ENCODE measurements at regions of chr6 and their contacts with region 1.

Region 1: GRCh38 chr6:2940010-2940850 is 31.1 kb downstream of the SERPINB6 start:
- DNase-seq: peak; percentile 31 to 90 (median 77)
- ATAC-seq: peak; percentile 67 to 68
- H3K4me3 Mint-ChIP-seq: peak overlapping the region; percentile 77 to 94 (median 85)
- H3K27ac Mint-ChIP-seq: peak overlapping the region; percentile 84 to 99 (median 94)
- H3K4me1 Mint-ChIP-seq: peaks cover 38 to 82% (median 69%) of the 10 kb centered on the region in 4 donors
- H3K27me3 Mint-ChIP-seq: no peaks in the 10 kb centered on the region

Region 2: DNA sequence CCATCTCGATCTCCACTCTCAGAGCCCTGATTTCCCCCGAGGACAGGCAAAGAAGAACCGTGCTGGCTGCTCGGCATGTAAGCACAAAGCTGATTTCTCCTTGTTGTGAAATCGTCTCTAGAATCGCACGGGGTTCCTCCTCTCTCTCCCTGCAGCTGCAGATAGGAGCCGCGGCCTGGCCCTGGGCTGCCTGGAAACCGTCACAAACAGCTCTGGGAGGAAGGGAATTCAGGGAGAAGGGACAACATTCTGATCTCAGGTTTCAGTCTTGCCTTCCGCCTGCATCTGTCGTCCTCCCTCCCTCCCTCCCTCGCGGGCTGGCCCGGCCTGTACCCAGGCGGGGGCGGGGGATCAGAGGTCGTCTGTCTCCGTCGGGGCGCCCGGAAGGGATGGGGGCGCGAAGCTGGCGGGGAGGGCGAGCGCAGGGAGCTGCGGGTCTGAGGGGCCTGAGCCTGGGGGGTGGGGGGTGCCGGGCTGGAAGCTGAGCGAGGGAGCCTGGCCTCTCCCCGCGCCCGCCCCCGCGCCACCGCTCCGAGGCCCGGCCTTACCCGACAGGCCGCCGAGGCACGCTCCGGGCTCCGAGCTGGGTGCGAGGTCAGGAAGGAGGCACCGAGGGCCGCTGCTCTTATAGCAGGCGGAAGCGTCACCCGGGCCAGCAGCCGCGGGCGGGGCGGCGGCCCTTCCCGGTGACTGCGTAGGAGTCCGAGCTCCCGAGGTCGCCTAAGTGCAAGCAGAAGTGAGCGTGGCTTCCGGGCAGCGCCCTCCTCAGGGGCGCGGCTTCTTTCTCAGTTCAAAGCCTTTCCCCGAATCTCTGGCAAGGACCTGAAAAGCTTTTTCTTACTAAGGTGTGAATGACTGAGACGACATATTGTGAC is 98.7 kb before region 1 on chr6 and contains the start of gene SERPINB1:
- POLR2A ChIA-PET with region 1: interaction called, 35 read pairs
- DNase-seq: peak; percentile 56 to 82 (median 66)
- ATAC-seq: peak; percentile 78
- H3K4me3 Mint-ChIP-seq: peak within 1 kb of the TSS; percentile 86 to 95 (median 90)
- H3K27ac Mint-ChIP-seq: peak within 1 kb of the TSS; percentile 86 to 97 (median 94)
- H3K4me1 Mint-ChIP-seq: peaks cover 22 to 71% (median 50%) of the 10 kb centered on the region in 4 donors
- H3K27me3 Mint-ChIP-seq: no peaks in the 10 kb centered on the region
- polyA plus RNA-seq, gene SERPINB1: 121 to 130 (median 123) TPM

Region 3: GRCh38 chr6:2876210-2877056 is 63.8 kb before region 1 on chr6:
- POLR2A ChIA-PET with region 1: interaction called, 20 read pairs
- DNase-seq: no peak
- ATAC-seq: peak; percentile 15 to 24
- H3K4me3 Mint-ChIP-seq: peak overlapping the region; percentile 72 to 94 (median 89)
- H3K27ac Mint-ChIP-seq: peak overlapping the region; percentile 91 to 99 (median 96)
- H3K4me1 Mint-ChIP-seq: peaks cover 44 to 88% (median 81%) of the 10 kb centered on the region in 4 donors
- H3K27me3 Mint-ChIP-seq: no peaks in the 10 kb centered on the region

Region 4: DNA sequence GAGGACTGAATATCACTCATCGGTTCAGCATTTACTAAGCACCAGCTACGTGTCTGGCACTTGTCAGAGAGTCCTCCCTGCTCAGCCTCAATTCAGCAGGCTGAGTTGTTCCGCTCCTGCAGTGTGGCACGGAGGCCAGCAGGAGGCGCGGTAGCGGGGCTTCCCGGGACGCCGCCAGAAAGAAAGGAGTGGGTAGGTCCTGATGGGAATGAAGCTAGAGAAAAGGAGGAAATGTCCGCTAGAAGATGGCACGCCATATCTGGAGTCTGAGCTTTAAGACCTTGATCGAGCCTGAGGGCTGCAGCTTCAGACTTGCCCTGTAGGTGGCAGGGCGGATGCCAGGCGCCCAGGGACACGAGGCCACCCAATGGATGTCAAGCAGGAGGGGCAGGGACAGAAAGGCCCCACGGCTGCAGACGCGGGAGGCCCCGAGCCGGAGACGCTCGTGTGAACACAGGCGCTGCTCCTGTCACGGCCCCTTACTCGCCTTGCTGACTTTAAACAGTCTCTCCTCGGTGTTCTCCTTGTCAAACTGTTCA is 12.4 kb after region 1 on chr6:
- POLR2A ChIA-PET with region 1: interaction called, 147 read pairs
- DNase-seq: peak in 5 of 10 donors; percentile 30 to 63 (median 43)
- ATAC-seq: peak; percentile 67 to 94
- H3K4me3 Mint-ChIP-seq: peak overlapping the region in 5 of 10 donors; percentile 10 to 62 (median 46)
- H3K27ac Mint-ChIP-seq: peak overlapping the region in 6 of 10 donors; percentile 3 to 85 (median 40)
- H3K4me1 Mint-ChIP-seq: peaks cover 9 to 33% (median 17%) of the 10 kb centered on the region in 4 donors
- H3K27me3 Mint-ChIP-seq: no peaks in the 10 kb centered on the region

Region 5: GRCh38 chr6:2966347-2966746 is 26.1 kb after region 1 on chr6:
- POLR2A ChIA-PET with region 1: interaction called, 60 read pairs
- DNase-seq: no peak
- ATAC-seq: no peak
- H3K4me3 Mint-ChIP-seq: peak overlapping the region in 1 of 10 donors; percentile 12
- H3K27ac Mint-ChIP-seq: peak overlapping the region in 8 of 10 donors; percentile 10 to 91 (median 45)
- H3K4me1 Mint-ChIP-seq: peaks cover 36 to 74% (median 43%) of the 10 kb centered on the region in 4 donors
- H3K27me3 Mint-ChIP-seq: peaks cover 0 to 1% (median 0%) of the 10 kb centered on the region in 5 donors

Region 6: GRCh38 chr6:2999618-3000557 is 59.7 kb after region 1 on chr6 and contains the start of gene NQO2:
- POLR2A ChIA-PET with region 1: interaction called, 10 read pairs
- DNase-seq: peak; percentile 73 to 93 (median 85)
- ATAC-seq: peak; percentile 72 to 79
- H3K4me3 Mint-ChIP-seq: peak within 1 kb of the TSS; percentile 85 to 97 (median 90)
- H3K27ac Mint-ChIP-seq: peak within 1 kb of the TSS; percentile 81 to 97 (median 92)
- H3K4me1 Mint-ChIP-seq: peaks cover 11 to 29% (median 25%) of the 10 kb centered on the region in 4 donors
- H3K27me3 Mint-ChIP-seq: no peaks in the 10 kb centered on the region
- polyA plus RNA-seq, gene NQO2: 37.9 to 48.1 (median 39.0) TPM